Heart right ventricle (tissue), 16 donors: ENCODE measurements at regions of chr2 and their contacts with region 1.

Region 1: GRCh38 chr2:37890893-37891495 is 34.1 kb upstream of the RMDN2 start:
- DNase-seq: peak; percentile 67
- ATAC-seq: peak; percentile 79 to 95 (median 90)
- H3K4me3 ChIP-seq: no peak overlapping the region
- H3K27ac ChIP-seq: no peak overlapping the region
- H3K4me1 ChIP-seq: peaks cover 0 to 45% (median 5%) of the 10 kb centered on the region in 9 donors
- H3K27me3 ChIP-seq: peaks cover 0 to 5% (median 0%) of the 10 kb centered on the region in 7 donors
- CTCF ChIP-seq: peak; percentile 66 to 89 (median 80)

Region 2: GRCh38 chr2:37168217-37168981 is 722.6 kb before region 1 on chr2:
- intact Hi-C with region 1: loop called in 2 of 10 experiments (anchors 5 to 10 kb)
- DNase-seq: no peak
- ATAC-seq: peak in 3 of 8 donors; percentile 57 to 62 (median 61)
- H3K4me3 ChIP-seq: no peak overlapping the region
- H3K27ac ChIP-seq: no peak overlapping the region
- H3K4me1 ChIP-seq: peaks cover 0 to 4% (median 0%) of the 10 kb centered on the region in 9 donors
- H3K27me3 ChIP-seq: no peaks in the 10 kb centered on the region
- CTCF ChIP-seq: peak; percentile 42 to 81 (median 72)

Region 3: GRCh38 chr2:37389989-37390765 is 500.8 kb before region 1 on chr2:
- intact Hi-C with region 1: loop called in 3 of 10 experiments (anchors 5 kb)
- DNase-seq: peak in 1 of 2 donors; percentile 26
- ATAC-seq: peak in 6 of 8 donors; percentile 49 to 90 (median 77)
- H3K4me3 ChIP-seq: no peak overlapping the region
- H3K27ac ChIP-seq: peak overlapping the region in 7 of 10 donors; percentile 14 to 72 (median 48)
- H3K4me1 ChIP-seq: peaks cover 0 to 32% (median 16%) of the 10 kb centered on the region in 9 donors
- H3K27me3 ChIP-seq: no peaks in the 10 kb centered on the region
- CTCF ChIP-seq: no peak

Region 4: GRCh38 chr2:37993143-37993542 is 102.1 kb after region 1 on chr2:
- intact Hi-C with region 1: no loop called
- DNase-seq: no peak
- ATAC-seq: no peak
- H3K4me3 ChIP-seq: no peak overlapping the region
- H3K27ac ChIP-seq: no peak overlapping the region
- H3K4me1 ChIP-seq: peaks cover 0 to 4% (median 0%) of the 10 kb centered on the region in 9 donors
- H3K27me3 ChIP-seq: no peaks in the 10 kb centered on the region
- CTCF ChIP-seq: no peak

Region 5: GRCh38 chr2:38146275-38146906 is 255.4 kb after region 1 on chr2:
- intact Hi-C with region 1: no loop called
- DNase-seq: peak; percentile 17 to 65
- ATAC-seq: peak; percentile 71 to 94 (median 84)
- H3K4me3 ChIP-seq: peak overlapping the region in 1 of 10 donors; percentile 13
- H3K27ac ChIP-seq: peak overlapping the region; percentile 15 to 91 (median 77)
- H3K4me1 ChIP-seq: peaks cover 0 to 56% (median 12%) of the 10 kb centered on the region in 9 donors
- H3K27me3 ChIP-seq: no peaks in the 10 kb centered on the region
- CTCF ChIP-seq: no peak